K562 (cell line): ENCODE measurements at regions of chr3 and their contacts with region 1.

Region 1: GRCh38 chr3:197224034-197224444 is 74.4 kb downstream of the DLG1 start:
- DNase-seq: peak; percentile 46 to 64 (median 54)
- ATAC-seq: peak; percentile 70
- H3K4me3 ChIP-seq: no peak overlapping the region
- H3K27ac ChIP-seq: no peak overlapping the region
- H3K4me1 ChIP-seq: peaks cover 4 to 12% of the 10 kb centered on the region in 2 experiments; a peak in 4 of 5 replicates
- H3K27me3 ChIP-seq: no peaks in the 10 kb centered on the region
- CTCF ChIP-seq: peak; percentile 46 to 69 (median 57); a peak in 5 of 6 replicates
- EP300 ChIP-seq: no peak
- POLR2A ChIP-seq: no peak
- RAD21 ChIP-seq: peak; percentile 60 to 75

Region 2: GRCh38 chr3:197444793-197445379 is 220.8 kb after region 1 on chr3:
- CTCF ChIA-PET with region 1: no interaction called
- POLR2A ChIA-PET with region 1: no interaction called
- in situ Hi-C with region 1: no loop called
- intact Hi-C with region 1: loop called (anchors 5 kb)
- DNase-seq: no peak
- ATAC-seq: no peak; the same call in 2 of the 3 replicates
- H3K4me3 ChIP-seq: no peak overlapping the region
- H3K27ac ChIP-seq: no peak overlapping the region; the same call in 2 of the 3 replicates
- H3K4me1 ChIP-seq: peaks cover 16 to 52% of the 10 kb centered on the region in 2 experiments
- H3K27me3 ChIP-seq: no peaks in the 10 kb centered on the region; a peak in 1 of 5 replicates
- CTCF ChIP-seq: no peak
- EP300 ChIP-seq: no peak
- POLR2A ChIP-seq: no peak
- RAD21 ChIP-seq: no peak

Region 3: GRCh38 chr3:197487908-197488391 is 263.9 kb after region 1 on chr3:
- CTCF ChIA-PET with region 1: no interaction called
- POLR2A ChIA-PET with region 1: no interaction called
- in situ Hi-C with region 1: no loop called
- intact Hi-C with region 1: no loop called
- DNase-seq: peak in 1 of 4 experiments; percentile 28
- ATAC-seq: peak; percentile 48; the same call in 2 of the 3 replicates
- H3K4me3 ChIP-seq: no peak overlapping the region
- H3K27ac ChIP-seq: no peak overlapping the region
- H3K4me1 ChIP-seq: no peaks in the 10 kb centered on the region
- H3K27me3 ChIP-seq: peaks cover 49 to 92% of the 10 kb centered on the region in 2 experiments
- CTCF ChIP-seq: no peak
- EP300 ChIP-seq: no peak
- POLR2A ChIP-seq: no peak
- RAD21 ChIP-seq: no peak

Region 4: GRCh38 chr3:197501879-197502620 is 278.0 kb after region 1 on chr3:
- CTCF ChIA-PET with region 1: no interaction called
- POLR2A ChIA-PET with region 1: no interaction called
- in situ Hi-C with region 1: no loop called
- intact Hi-C with region 1: loop called (anchors 10 kb)
- DNase-seq: no peak
- ATAC-seq: peak; percentile 62
- H3K4me3 ChIP-seq: no peak overlapping the region
- H3K27ac ChIP-seq: no peak overlapping the region
- H3K4me1 ChIP-seq: peaks cover 6 to 17% of the 10 kb centered on the region in 2 experiments; a peak in 4 of 5 replicates
- H3K27me3 ChIP-seq: peaks cover 0 to 13% of the 10 kb centered on the region in 2 experiments; a peak in 4 of 5 replicates
- CTCF ChIP-seq: peak; percentile 35 to 57 (median 37); a peak in 4 of 6 replicates
- EP300 ChIP-seq: no peak
- POLR2A ChIP-seq: no peak
- RAD21 ChIP-seq: peak; percentile 21 to 60; a peak in 2 of 4 replicates

Region 5: GRCh38 chr3:197511130-197511529 is 287.1 kb after region 1 on chr3:
- CTCF ChIA-PET with region 1: interaction called, 12 read pairs
- POLR2A ChIA-PET with region 1: no interaction called
- in situ Hi-C with region 1: no loop called
- intact Hi-C with region 1: loop called (anchors 10 kb)
- DNase-seq: no peak
- ATAC-seq: no peak
- H3K4me3 ChIP-seq: no peak overlapping the region
- H3K27ac ChIP-seq: no peak overlapping the region
- H3K4me1 ChIP-seq: peaks cover under 1 to 38% of the 10 kb centered on the region in 2 experiments
- H3K27me3 ChIP-seq: peaks cover 14 to 34% of the 10 kb centered on the region in 2 experiments; a peak in 4 of 5 replicates
- CTCF ChIP-seq: no peak
- EP300 ChIP-seq: no peak
- POLR2A ChIP-seq: no peak
- RAD21 ChIP-seq: no peak